Panc1 (cell line): ENCODE measurements at regions of chr7 and their contacts with region 1.

Region 1: GRCh38 chr7:65892835-65893234 is 20.0 kb downstream of the VKORC1L1 start:
- DNase-seq: no peak
- ATAC-seq: no peak
- H3K4me3 ChIP-seq: no peak overlapping the region
- H3K27ac ChIP-seq: no peak overlapping the region
- H3K4me1 ChIP-seq: no peaks in the 10 kb centered on the region
- H3K27me3 ChIP-seq: no peaks in the 10 kb centered on the region
- CTCF ChIP-seq: no peak

Region 2: DNA sequence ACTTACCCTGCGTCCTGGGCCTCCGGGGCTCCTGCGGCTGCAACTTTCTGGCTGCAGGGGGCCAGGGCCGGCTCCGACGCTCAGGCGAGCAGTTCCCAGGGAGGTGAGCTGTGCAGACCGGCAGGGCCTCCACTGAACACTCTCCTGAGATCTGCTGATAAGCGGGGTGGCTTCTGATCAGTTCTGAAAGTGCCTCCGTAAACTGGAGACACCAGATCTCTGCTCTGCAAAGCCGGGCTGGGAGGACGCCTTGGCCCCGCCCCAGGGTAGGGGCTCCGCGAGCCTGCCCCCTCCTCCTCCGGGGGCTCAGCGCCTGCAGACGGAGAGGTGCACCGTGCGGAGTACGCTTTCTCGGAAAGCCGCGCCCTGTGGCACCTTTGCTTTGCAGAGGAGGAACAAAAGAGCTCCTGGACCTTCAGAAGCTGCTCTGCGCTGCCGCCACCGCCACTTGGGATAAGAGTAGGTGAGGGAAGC is 161.2 kb before region 1 on chr7:
- CTCF ChIA-PET with region 1: interaction called, 11 read pairs
- POLR2A ChIA-PET with region 1: no interaction called
- in situ Hi-C with region 1: no loop called
- intact Hi-C with region 1: no loop called
- DNase-seq: no peak
- ATAC-seq: no peak
- H3K4me3 ChIP-seq: no peak overlapping the region
- H3K27ac ChIP-seq: no peak overlapping the region
- H3K4me1 ChIP-seq: no peaks in the 10 kb centered on the region
- H3K27me3 ChIP-seq: no peaks in the 10 kb centered on the region
- CTCF ChIP-seq: no peak